ENCODE measurements at regions of chr6 and their contacts with region 1.

Region 1: DNA sequence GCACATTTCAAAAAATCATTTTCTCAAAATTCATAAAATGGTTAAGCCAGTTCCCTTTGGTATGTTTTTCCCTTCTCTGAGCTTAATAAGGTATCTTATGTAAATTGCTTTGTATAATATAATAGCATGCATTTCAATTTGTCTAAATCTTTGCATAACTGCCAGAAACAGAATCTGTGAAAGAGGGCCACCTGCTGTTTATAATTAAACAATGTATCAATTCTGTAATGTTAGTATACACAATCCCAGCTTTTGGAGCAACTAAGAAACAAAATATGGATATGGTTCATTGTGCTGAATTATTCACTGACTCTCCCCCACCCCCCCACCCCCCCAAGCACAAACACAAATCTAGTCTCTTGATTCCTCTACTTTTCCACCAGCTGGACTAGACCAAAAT is 54.8 kb downstream of the GPX5 start:
- DNase-seq: peak; percentile 41
- ATAC-seq: peak; percentile 35; the same call in 1 of the 2 replicates
- H3K4me3 ChIP-seq: no peak overlapping the region
- H3K27ac ChIP-seq: no peak overlapping the region
- H3K4me1 ChIP-seq: peaks cover 7% of the 10 kb centered on the region
- H3K27me3 ChIP-seq: no peaks in the 10 kb centered on the region
- CTCF ChIP-seq: peak; percentile 51

Region 2: GRCh38 chr6:28496099-28496779 is 84.2 kb before region 1 on chr6:
- CTCF ChIA-PET with region 1: interaction called, 5 read pairs
- POLR2A ChIA-PET with region 1: no interaction called
- intact Hi-C with region 1: loop called (anchors 1 kb)
- DNase-seq: peak; percentile 26
- ATAC-seq: peak; percentile 35; the same call in 1 of the 2 replicates
- H3K4me3 ChIP-seq: no peak overlapping the region
- H3K27ac ChIP-seq: no peak overlapping the region
- H3K4me1 ChIP-seq: peaks cover 13% of the 10 kb centered on the region
- H3K27me3 ChIP-seq: peaks cover 21% of the 10 kb centered on the region; the same call in 1 of the 2 replicates
- CTCF ChIP-seq: peak; percentile 53

Region 3: GRCh38 chr6:28555136-28555535 is 25.3 kb before region 1 on chr6:
- CTCF ChIA-PET with region 1: no interaction called
- POLR2A ChIA-PET with region 1: interaction called, 12 read pairs
- intact Hi-C with region 1: no loop called
- DNase-seq: no peak
- ATAC-seq: no peak
- H3K4me3 ChIP-seq: no peak overlapping the region
- H3K27ac ChIP-seq: no peak overlapping the region
- H3K4me1 ChIP-seq: no peaks in the 10 kb centered on the region
- H3K27me3 ChIP-seq: peaks cover 37% of the 10 kb centered on the region
- CTCF ChIP-seq: no peak

Measured in PC-3 (cell line).